K562 (cell line): ENCODE measurements at regions of chr1 and their contacts with region 1.

Region 1: DNA sequence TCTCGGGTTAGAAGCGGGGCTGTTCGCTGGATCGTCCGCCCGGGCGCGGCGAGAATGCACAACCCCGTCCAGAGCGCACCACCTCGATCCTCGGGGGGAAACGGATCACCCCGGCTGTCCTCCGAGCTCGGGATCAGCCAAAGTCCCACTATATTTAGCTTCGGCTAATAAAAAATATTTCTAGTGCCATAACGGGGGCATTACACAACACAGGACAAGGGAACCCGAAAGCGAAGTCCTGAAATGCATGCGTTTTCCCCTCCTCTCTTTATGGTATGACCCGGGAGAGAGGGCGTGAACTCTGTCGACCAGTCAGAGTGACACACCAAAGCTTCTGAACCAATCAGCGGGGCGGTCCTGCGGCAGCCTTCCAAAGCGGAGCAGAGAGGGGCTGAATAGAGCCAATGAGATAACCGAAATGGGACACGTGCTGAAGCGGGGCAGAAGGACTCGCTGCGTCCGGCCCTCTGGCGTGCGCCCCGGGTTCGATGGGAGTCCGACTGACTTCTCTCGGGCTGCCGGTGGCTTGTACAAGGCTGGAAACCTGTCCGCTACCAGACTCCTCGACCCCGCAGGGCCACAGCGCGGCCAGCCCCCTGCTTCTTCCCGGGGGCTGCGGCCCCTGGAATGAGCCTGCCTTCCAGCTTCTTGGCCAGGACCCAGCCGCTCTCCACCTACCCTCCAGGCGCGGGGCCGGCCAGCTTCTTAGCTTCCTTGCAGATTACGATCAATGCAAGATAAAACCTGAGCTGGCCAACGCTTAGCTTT is at the start of gene ALDH4A1:
- DNase-seq: peak; percentile 98 to 100 (median 98)
- ATAC-seq: peak; percentile 96
- H3K4me3 ChIP-seq: peak within 1 kb of the TSS; percentile 77
- H3K27ac ChIP-seq: peak within 1 kb of the TSS; percentile 92
- H3K4me1 ChIP-seq: peaks cover 30% of the 10 kb centered on the region in 2 experiments
- H3K27me3 ChIP-seq: no peaks in the 10 kb centered on the region
- CTCF ChIP-seq: no peak
- EP300 ChIP-seq: 0 out of 2 replicates have a peak, but pooled peaks have one; percentile 9
- POLR2A ChIP-seq: peak; percentile 94
- RAD21 ChIP-seq: no peak
- polyA plus RNA-seq, gene ALDH4A1: 0.27 to 0.73 TPM

Region 2: DNA sequence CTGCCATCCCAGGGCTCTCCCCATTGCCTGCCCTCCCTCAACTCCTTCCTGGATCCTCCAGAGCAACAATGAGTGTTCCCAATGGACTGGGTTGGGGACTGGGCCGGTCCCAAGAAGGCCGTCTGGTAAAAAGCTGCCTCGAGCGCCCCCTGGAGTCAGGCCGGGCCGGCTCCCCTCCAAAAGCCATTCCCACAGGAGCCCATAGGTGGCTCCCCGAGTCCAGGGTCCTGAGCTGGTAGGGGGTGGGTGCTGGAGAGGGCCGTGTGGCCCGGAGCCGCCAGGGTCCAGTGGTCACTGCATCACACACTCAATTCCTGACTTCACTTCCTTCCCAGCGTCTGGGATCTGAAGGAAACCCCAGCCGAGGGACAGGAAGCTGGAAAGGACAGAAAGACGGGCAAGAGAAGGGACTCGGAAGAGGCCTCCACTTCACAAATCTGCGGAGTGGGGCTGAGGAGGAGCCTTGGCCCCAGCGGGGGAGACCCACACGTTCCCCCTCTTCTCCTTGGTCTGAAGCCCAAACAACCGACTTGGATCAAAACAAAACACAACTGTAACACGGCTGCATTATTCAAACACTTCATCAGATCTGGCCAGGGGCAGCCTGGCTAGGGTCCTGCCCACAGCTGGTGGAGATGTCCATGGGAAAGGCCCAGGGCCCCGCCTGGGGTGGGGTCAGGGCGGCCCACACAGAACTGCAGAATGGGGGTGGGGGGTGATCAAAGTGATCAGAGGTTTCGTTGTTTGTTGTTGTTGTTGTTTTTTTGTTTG is 10.5 kb after region 1 on chr1:
- CTCF ChIA-PET with region 1: interaction called, 7 read pairs
- POLR2A ChIA-PET with region 1: interaction called, 13 read pairs
- in situ Hi-C with region 1: no loop called
- intact Hi-C with region 1: no loop called
- DNase-seq: peak; percentile 89 to 95 (median 94)
- ATAC-seq: peak; percentile 92
- H3K4me3 ChIP-seq: no peak overlapping the region
- H3K27ac ChIP-seq: no peak overlapping the region
- H3K4me1 ChIP-seq: peaks cover 14 to 34% of the 10 kb centered on the region in 2 experiments
- H3K27me3 ChIP-seq: peaks cover 19 to 34% of the 10 kb centered on the region in 2 experiments
- CTCF ChIP-seq: peak; percentile 100
- EP300 ChIP-seq: no peak
- POLR2A ChIP-seq: no peak
- RAD21 ChIP-seq: peak; percentile 94 to 99

Region 3: DNA sequence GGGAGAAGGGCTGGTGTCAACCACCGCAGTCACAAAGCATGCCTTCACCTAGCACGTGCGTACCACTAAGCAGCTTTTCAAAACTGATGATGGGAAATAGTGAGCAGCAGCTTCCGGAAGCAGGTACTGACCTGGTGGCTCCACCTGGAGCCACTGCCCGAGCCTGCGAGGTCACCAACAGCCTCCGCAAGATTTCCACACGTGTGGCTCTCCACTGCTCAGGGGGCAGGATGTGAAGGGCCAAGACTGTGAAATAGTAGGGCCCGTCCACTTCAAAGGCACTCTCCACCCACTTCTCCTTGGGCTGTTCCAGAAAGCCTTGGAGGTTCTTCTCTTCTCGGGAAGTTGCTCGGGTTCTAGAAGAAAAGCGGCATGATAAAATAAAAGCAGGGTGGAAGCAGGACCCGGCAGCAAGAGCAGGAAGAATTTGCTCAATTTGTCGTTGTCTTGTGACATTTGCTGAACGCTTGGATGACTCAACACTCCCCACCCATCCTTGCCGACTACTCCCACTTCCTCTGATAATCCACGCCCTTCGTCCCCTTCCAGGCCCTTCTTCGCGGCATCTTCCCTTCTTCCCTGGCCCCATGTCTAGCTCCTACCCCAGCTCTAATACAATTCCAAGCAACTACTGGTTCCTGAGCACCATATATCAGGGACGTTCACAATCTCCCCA is 178.6 kb after region 1 on chr1:
- CTCF ChIA-PET with region 1: no interaction called
- POLR2A ChIA-PET with region 1: no interaction called
- in situ Hi-C with region 1: no loop called
- intact Hi-C with region 1: loop called (anchors 5 kb)
- DNase-seq: peak; percentile 75 to 88 (median 80)
- ATAC-seq: peak; percentile 93
- H3K4me3 ChIP-seq: peak overlapping the region; percentile 7; the same call in 1 of the 2 replicates
- H3K27ac ChIP-seq: peak overlapping the region; percentile 84
- H3K4me1 ChIP-seq: peaks cover 15 to 19% of the 10 kb centered on the region in 2 experiments
- H3K27me3 ChIP-seq: no peaks in the 10 kb centered on the region
- CTCF ChIP-seq: no peak
- EP300 ChIP-seq: peak; percentile 53; the same call in 1 of the 2 replicates
- POLR2A ChIP-seq: no peak; the same call in 1 of the 2 replicates
- RAD21 ChIP-seq: no peak

Region 4: GRCh38 chr1:19113697-19114092 is 211.0 kb after region 1 on chr1:
- CTCF ChIA-PET with region 1: no interaction called
- POLR2A ChIA-PET with region 1: no interaction called
- in situ Hi-C with region 1: no loop called
- intact Hi-C with region 1: loop called (anchors 5 kb)
- DNase-seq: peak; percentile 73 to 82 (median 75)
- ATAC-seq: peak; percentile 86
- H3K4me3 ChIP-seq: no peak overlapping the region
- H3K27ac ChIP-seq: no peak overlapping the region
- H3K4me1 ChIP-seq: peaks cover 7 to 17% of the 10 kb centered on the region in 2 experiments; a peak in 3 of 5 replicates
- H3K27me3 ChIP-seq: no peaks in the 10 kb centered on the region
- CTCF ChIP-seq: peak; percentile 66 to 77 (median 74)
- EP300 ChIP-seq: no peak
- POLR2A ChIP-seq: no peak
- RAD21 ChIP-seq: peak; percentile 57 to 68

Region 5: GRCh38 chr1:19220991-19221390 is 318.3 kb after region 1 on chr1:
- CTCF ChIA-PET with region 1: no interaction called
- POLR2A ChIA-PET with region 1: no interaction called
- in situ Hi-C with region 1: loop called (anchors 10 kb)
- intact Hi-C with region 1: no loop called
- DNase-seq: no peak
- ATAC-seq: no peak
- H3K4me3 ChIP-seq: no peak overlapping the region
- H3K27ac ChIP-seq: no peak overlapping the region
- H3K4me1 ChIP-seq: no peaks in the 10 kb centered on the region
- H3K27me3 ChIP-seq: no peaks in the 10 kb centered on the region; a peak in 1 of 5 replicates
- CTCF ChIP-seq: no peak
- EP300 ChIP-seq: no peak
- POLR2A ChIP-seq: no peak
- RAD21 ChIP-seq: no peak